ENCODE measurements at regions of chr16 and their contacts with region 1.

Region 1: DNA sequence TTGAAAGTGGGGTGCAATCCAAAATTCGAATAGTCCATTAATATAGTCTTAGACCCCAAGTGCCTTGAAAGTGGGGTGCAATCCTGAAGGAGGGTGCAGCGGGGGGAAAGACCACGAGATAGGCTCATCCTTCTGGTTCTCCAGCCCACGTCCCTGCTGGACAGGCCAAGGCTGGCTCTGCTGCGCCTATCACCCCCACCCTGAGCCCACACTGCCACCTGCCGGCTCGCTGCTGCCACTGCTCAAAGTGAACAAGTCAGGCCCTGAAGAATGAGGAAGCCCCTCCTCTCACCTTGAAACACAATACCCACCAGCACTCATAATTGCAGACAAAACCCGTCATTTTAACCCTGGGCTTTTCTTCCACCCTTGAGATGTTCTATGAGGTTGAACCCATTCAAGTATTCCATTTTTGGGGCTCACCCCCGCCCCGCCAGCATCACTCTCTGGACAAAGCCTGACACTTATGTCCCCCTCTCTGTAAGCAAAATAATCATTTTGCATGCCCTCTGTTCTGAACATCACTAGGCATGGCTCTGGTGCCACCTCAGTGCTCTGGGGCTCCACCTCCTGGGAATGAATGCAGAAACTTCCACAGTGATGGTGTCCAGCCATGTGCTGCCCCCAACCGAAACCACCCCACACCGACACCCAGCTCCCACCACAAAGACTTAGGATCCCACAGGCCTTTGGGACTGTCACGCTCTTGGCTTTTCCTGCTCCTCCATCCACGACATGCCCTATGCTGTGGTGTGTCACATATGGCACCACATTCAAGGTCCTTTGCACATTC is 56.8 kb downstream of the BEAN1 start:
- DNase-seq: peak; percentile 83 to 87
- ATAC-seq: peak; percentile 71 to 84 (median 79)
- H3K4me3 ChIP-seq: no peak overlapping the region
- H3K27ac ChIP-seq: no peak overlapping the region
- H3K4me1 ChIP-seq: peaks cover 0 to 38% (median 17%) of the 10 kb centered on the region in 9 donors
- H3K27me3 ChIP-seq: no peaks in the 10 kb centered on the region
- CTCF ChIP-seq: peak; percentile 90 to 96 (median 95)

Region 2: DNA sequence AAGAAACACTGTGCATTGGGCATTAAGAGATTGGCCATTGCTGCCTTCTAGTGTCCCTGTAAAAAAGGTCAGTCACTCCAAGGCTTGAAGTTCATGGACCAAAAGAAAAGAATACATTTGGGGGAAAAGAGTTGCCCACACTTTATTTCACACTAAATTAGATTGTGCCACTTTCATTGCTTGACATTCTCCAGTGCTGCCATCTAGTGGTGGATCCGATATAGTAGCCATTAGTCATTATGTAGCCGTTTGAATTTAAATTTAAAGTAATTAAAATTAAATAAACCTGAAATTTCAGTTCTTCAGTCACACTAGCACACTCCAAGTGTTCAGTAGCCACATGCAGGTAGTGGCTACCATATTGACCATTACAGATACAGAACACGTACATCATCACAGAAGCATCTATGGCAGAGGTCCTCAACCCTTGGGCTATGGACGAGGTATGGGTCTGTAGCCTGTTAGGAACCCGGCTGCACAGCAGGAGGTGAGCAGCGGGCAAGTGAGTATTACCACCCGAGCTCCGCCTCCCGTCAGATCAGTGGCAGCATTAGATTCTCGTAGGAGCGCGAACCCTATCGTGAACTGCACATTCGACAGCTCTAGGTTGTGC is 139.2 kb before region 1 on chr16:
- intact Hi-C with region 1: loop called in 5 of 10 experiments (anchors 2 to 10 kb)
- DNase-seq: peak in 1 of 2 donors; percentile 52
- ATAC-seq: peak in 1 of 8 donors; percentile 37
- H3K4me3 ChIP-seq: no peak overlapping the region
- H3K27ac ChIP-seq: no peak overlapping the region
- H3K4me1 ChIP-seq: no peaks in the 10 kb centered on the region
- H3K27me3 ChIP-seq: peaks cover 0 to 24% (median 0%) of the 10 kb centered on the region in 7 donors
- CTCF ChIP-seq: peak; percentile 68 to 84 (median 79)

Region 3: DNA sequence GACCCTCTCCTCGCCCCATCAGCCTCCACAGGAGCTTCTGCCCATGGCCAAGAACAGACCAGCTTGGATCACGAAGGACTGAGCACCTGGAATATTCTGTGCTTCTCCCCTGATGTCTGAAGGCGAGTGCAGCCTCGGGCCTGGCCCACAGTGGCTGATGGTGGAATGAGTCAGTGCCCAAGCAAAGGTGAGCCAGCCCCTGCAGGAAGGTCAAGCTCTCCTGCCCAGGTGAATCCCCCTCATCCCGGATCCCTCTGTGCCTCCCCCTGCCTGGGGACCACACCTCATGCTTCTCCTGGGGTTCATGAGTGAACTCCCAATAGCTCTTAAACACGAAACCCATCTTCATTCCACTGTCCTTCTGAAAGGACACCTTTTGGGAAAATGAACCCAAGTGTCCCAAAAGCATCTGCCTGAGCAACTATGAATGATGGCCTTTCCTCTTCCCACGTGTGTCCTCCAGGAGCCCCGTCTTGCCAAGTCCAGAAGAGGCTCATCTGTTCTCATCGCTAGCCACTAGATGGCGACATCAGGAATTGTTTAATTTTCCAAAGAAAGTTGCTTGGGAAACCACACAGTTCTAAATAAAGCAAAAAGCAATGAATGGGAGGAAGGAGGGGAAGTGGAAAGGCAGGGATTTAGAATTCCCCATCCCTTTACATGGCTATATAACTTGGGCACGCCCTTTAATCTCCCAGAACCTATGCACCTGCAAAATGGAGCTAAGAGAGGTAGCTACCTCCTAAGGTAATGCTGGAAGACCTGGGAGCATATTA is 126.5 kb before region 1 on chr16:
- intact Hi-C with region 1: loop called in 6 of 10 experiments (anchors 2 to 5 kb)
- DNase-seq: peak in 1 of 2 donors; percentile 78
- ATAC-seq: peak in 6 of 8 donors; percentile 17 to 45 (median 32)
- H3K4me3 ChIP-seq: no peak overlapping the region
- H3K27ac ChIP-seq: peak overlapping the region in 5 of 10 donors; percentile 32 to 96 (median 40)
- H3K4me1 ChIP-seq: peaks cover 7 to 59% (median 37%) of the 10 kb centered on the region in 9 donors
- H3K27me3 ChIP-seq: peaks cover 0 to 19% (median 0%) of the 10 kb centered on the region in 7 donors
- CTCF ChIP-seq: peak; percentile 62 to 87 (median 81)

Region 4: GRCh38 chr16:66406534-66407221 is 77.2 kb before region 1 on chr16:
- intact Hi-C with region 1: loop called (anchors 1 to 5 kb)
- DNase-seq: peak; percentile 88 to 91
- ATAC-seq: peak; percentile 77 to 94 (median 88)
- H3K4me3 ChIP-seq: peak overlapping the region; percentile 37 to 81 (median 60)
- H3K27ac ChIP-seq: peak overlapping the region in 9 of 10 donors; percentile 28 to 81 (median 65)
- H3K4me1 ChIP-seq: peaks cover 6 to 38% (median 34%) of the 10 kb centered on the region in 9 donors
- H3K27me3 ChIP-seq: no peaks in the 10 kb centered on the region
- CTCF ChIP-seq: peak; percentile 85 to 96 (median 93)

Region 5: DNA sequence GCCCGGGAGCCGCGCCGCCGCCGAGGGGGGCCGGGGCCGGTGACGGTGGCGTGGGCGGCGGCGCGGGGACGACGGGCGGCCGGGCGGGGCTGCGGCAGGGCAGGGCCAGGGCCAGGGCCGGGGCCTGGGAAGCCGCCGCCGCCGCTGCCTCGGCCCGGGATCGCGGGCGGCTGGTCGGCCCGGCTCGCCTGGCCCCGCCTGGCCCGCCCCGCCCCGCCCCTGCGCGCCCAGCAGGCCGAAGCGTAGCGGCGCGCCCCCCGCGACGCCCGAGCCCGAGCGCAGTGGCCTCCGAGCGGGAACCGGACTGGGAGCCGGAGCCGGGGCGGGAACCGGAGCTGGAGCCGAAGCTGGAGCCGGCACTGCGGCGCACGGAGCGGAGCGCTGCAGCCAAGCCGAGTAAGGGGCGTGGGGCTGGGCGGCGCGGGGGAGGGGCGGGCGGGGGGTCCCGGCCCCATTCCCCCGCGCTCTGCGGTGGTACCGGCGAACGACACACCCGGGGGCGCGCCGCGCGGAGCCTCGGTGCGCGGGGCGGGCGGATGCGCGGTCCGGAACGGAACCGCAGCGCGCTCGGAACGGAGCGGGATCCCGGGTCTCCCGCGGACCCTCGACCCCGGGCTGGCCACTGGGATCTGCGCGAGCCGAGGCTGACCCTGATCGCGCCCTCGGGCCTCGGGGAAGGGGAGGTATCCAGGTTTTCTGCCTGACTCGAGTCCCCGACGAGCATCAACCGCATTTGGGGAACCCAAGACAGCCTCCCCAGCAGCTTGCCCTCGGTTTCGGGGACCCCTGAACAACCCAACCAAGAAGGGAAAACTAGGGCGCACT is 56.6 kb before region 1 on chr16 and contains the start of gene BEAN1:
- intact Hi-C with region 1: loop called in 1 of 10 experiments (anchors 5 kb)
- DNase-seq: peak in 1 of 2 donors; percentile 40
- ATAC-seq: peak in 7 of 8 donors; percentile 18 to 77 (median 59)
- H3K4me3 ChIP-seq: peak within 1 kb of the TSS; percentile 16 to 70 (median 54)
- H3K27ac ChIP-seq: peak within 1 kb of the TSS in 1 of 10 donors; percentile 9
- H3K4me1 ChIP-seq: peaks cover 2 to 24% (median 18%) of the 10 kb centered on the region in 9 donors
- H3K27me3 ChIP-seq: peaks cover 0 to 55% (median 20%) of the 10 kb centered on the region in 7 donors
- CTCF ChIP-seq: peak in 1 of 9 donors; percentile 6
- total RNA-seq, gene BEAN1: 0.26 to 9.6 (median 2.0) TPM

Region 6: GRCh38 chr16:66552286-66553177 is 68.6 kb after region 1 on chr16 and contains the start of gene CKLF:
- intact Hi-C with region 1: loop called in 1 of 10 experiments (anchors 10 kb)
- DNase-seq: peak; percentile 88 to 92
- ATAC-seq: peak; percentile 85 to 95 (median 89)
- H3K4me3 ChIP-seq: peak within 1 kb of the TSS; percentile 33 to 89 (median 60)
- H3K27ac ChIP-seq: peak within 1 kb of the TSS; percentile 89 to 100 (median 96)
- H3K4me1 ChIP-seq: peaks cover 5 to 77% (median 57%) of the 10 kb centered on the region in 9 donors
- H3K27me3 ChIP-seq: no peaks in the 10 kb centered on the region
- CTCF ChIP-seq: no peak
- total RNA-seq, gene CKLF: 1.6 to 19.9 (median 6.7) TPM